ENCODE measurements at regions of chr19 and their contacts with region 1.

Region 1: GRCh38 chr19:49113762-49114629 is at the start of gene LIN7B:
- DNase-seq: peak; percentile 86

Region 2: GRCh38 chr19:49148784-49149651 is 35.0 kb after region 1 on chr19:
- CTCF ChIA-PET with region 1: interaction called, 4 read pairs
- POLR2A ChIA-PET with region 1: interaction called, 16 read pairs
- DNase-seq: peak; percentile 93

Region 3: DNA sequence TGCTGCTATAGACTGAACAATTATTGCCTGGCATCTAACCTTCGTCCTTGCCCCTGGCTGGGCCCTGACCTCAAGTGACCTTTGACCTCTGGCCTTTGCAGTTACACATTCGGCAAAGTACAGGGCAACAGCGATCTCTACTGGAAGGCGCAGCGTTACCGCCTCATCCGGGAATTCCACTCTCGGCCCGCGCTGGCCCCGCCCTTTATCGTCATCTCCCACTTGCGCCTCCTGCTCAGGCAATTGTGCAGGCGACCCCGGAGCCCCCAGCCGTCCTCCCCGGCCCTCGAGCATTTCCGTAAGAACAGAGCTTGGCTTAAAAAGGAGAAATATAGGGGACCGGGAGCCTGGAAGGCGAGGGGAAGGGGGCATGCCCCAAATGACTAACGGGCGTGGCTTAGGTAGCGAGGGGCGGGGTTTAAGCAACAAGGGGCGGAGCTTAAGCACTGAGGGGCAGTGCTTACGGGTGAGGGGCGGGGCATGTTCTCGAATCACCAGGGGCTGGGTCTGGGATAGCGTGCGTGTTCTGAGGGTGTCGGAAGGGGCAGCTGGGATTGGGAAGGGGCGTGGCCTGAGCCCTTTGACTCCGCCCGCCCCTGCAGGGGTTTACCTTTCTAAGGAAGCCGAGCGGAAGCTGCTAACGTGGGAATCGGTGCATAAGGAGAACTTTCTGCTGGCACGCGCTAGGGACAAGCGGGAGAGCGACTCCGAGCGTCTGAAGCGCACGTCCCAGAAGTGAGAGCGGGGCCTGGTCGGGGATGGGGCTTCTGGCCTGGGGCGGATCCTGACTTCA is 96.3 kb after region 1 on chr19:
- CTCF ChIA-PET with region 1: no interaction called
- POLR2A ChIA-PET with region 1: no interaction called
- DNase-seq: peak; percentile 55